ENCODE measurements at regions of chr17 and their contacts with region 1.

Region 1: DNA sequence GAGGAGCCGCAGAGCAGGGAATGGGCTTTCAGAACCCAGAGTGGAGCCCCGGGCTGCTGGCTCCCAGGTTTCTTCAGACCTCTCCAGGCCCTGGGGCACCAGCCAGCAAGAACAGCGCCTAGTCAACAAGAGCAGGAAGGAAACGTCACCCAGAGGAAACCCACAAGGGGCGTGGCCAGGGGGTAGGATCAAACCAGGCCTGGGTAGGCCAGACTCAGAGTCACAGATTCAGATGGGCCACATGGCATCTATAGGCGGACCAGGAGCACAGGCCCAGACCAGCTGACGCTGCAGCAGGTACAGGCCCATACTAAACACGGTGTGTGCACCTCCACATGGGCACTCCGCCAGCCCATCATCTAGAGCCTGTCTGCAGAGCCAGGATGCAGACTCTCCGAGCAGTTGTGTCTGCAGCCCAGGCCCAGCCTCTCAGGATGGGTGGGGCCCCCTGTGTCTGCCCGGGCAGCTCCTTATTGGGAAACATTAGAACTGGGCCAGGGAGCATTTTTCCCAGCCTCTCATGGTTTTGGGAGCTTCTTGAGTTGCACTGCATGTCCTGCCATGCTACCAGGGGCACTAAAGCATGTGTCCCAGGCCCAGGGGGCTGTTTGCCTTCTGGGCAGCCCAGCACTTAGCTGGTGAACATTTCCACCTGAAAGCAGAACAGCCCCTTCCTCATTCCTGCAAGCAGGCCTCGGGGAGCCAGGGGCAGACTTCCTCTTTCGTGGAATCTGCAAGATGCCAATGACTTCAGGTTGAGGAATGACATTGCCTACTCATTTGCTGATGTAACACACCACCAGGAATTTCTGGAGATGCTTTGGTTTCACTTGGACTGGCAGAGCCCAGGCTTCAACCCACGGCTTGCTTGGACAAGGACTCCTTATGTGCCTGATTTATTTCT is at the start of gene NLRP1:
- DNase-seq: peak; percentile 72 to 79
- ATAC-seq: peak; percentile 59 to 80
- H3K4me3 ChIP-seq: peak within 1 kb of the TSS; percentile 49 to 59 (median 56)
- H3K27ac ChIP-seq: peak within 1 kb of the TSS; percentile 79 to 84 (median 83)
- H3K4me1 ChIP-seq: peaks cover 19 to 21% of the 10 kb centered on the region in 2 donors
- H3K27me3 ChIP-seq: no peaks in the 10 kb centered on the region
- CTCF ChIP-seq: no peak
- POLR2A ChIP-seq: peak; percentile 45 to 68
- total RNA-seq, gene NLRP1: 3.6 to 7.7 (median 6.9) TPM

Region 2: GRCh38 chr17:5715478-5715877 is 130.8 kb after region 1 on chr17:
- in situ Hi-C with region 1: loop called in 2 of 4 experiments (anchors 10 to 25 kb)
- intact Hi-C with region 1: no loop called
- DNase-seq: no peak
- ATAC-seq: no peak
- H3K4me3 ChIP-seq: no peak overlapping the region
- H3K27ac ChIP-seq: no peak overlapping the region
- H3K4me1 ChIP-seq: peaks cover 5 to 16% of the 10 kb centered on the region in 2 donors
- H3K27me3 ChIP-seq: peaks cover 4 to 54% (median 8%) of the 10 kb centered on the region in 3 donors
- CTCF ChIP-seq: no peak
- POLR2A ChIP-seq: no peak

Region 3: GRCh38 chr17:6413065-6413464 is 828.4 kb after region 1 on chr17:
- in situ Hi-C with region 1: loop called in 1 of 4 experiments (anchors 5 kb)
- intact Hi-C with region 1: no loop called
- DNase-seq: no peak
- ATAC-seq: no peak
- H3K4me3 ChIP-seq: no peak overlapping the region
- H3K27ac ChIP-seq: no peak overlapping the region
- H3K4me1 ChIP-seq: no peaks in the 10 kb centered on the region
- H3K27me3 ChIP-seq: peaks cover 0 to 13% (median 4%) of the 10 kb centered on the region in 3 donors
- CTCF ChIP-seq: peak in 4 of 5 experiments; percentile 19 to 40 (median 26)
- POLR2A ChIP-seq: no peak

Region 4: DNA sequence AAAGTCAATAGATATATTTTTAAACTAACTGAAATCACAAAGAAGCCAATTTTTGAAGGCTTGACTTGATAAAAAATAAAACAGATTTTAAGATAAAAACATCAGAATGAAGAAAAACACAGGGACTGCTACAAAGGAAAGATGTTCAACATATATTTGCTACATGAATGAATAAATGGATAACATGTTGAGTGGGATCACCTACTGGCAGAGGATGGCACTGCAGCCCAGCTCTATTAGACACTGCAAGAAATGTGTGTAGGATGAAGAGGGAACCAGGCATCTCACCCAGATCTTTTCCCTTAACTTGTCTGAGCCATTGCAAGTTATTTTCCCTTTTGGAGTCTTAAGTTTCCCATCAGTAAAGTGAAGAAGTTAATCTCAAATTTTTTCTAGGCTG is 846.1 kb after region 1 on chr17:
- in situ Hi-C with region 1: loop called in 1 of 4 experiments (anchors 5 kb)
- intact Hi-C with region 1: loop called (anchors 5 kb)
- DNase-seq: no peak
- ATAC-seq: no peak
- H3K4me3 ChIP-seq: no peak overlapping the region
- H3K27ac ChIP-seq: no peak overlapping the region
- H3K4me1 ChIP-seq: no peaks in the 10 kb centered on the region
- H3K27me3 ChIP-seq: no peaks in the 10 kb centered on the region
- CTCF ChIP-seq: no peak
- POLR2A ChIP-seq: no peak

Measured in gastrocnemius medialis (tissue), 4 donors.